ENCODE measurements at regions of chr9 and their contacts with region 1.

Region 1: GRCh38 chr9:34403554-34404380 is 27.1 kb upstream of the MYORG start:
- DNase-seq: peak in 4 of 5 donors; percentile 47 to 66 (median 62)
- ATAC-seq: peak in 2 of 4 donors; percentile 53 to 59
- H3K4me3 ChIP-seq: no peak overlapping the region
- H3K27ac ChIP-seq: no peak overlapping the region
- H3K4me1 ChIP-seq: peaks cover 0 to 6% (median 0%) of the 10 kb centered on the region in 12 donors
- H3K27me3 ChIP-seq: no peaks in the 10 kb centered on the region
- CTCF ChIP-seq: peak; percentile 92 to 99 (median 97)
- POLR2A ChIP-seq: no peak

Region 2: DNA sequence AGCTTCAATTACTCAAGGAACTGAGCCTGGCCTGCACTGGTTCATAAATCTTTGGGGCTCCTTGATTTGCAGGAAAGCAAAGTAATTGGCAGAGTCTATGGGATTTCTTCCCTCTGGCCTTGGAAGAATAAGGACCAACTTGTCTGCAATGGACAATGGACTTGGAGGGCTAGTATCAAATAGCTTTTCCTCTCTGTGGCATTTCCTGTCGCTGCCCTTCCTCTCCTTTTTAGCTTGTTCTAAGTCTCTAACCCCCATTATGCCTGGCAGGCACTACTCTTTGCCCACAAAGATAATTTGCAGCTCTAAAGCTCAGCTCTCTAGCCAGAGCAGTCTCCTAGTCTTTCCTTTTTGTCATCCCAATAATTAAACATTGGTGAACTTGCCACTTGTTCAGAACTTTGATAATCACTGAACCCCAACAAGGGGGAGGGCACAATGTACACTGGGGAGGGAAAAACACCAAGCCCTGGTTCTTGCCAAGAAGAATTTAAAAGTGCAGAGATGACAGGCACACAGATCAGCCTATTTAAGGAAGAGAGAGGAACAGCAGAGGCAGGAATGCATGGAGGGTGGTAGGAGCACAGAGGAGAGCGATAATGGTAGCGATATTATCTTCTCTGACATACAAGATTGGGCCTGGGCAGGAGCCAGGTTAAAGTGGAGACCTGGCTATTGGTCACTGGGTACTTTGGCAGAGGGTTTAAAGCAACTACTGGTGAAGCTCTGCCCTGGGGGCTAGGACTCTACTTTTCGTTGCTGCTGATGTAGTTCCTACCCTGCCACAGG is 16.1 kb after region 1 on chr9:
- intact Hi-C with region 1: loop called in 1 of 10 experiments (anchors 2 kb)
- DNase-seq: no peak
- ATAC-seq: peak in 1 of 4 donors; percentile 15
- H3K4me3 ChIP-seq: no peak overlapping the region
- H3K27ac ChIP-seq: no peak overlapping the region
- H3K4me1 ChIP-seq: peaks cover 0 to 16% (median 5%) of the 10 kb centered on the region in 12 donors
- H3K27me3 ChIP-seq: no peaks in the 10 kb centered on the region
- CTCF ChIP-seq: no peak
- POLR2A ChIP-seq: no peak

Region 3: GRCh38 chr9:34437006-34437925 is 33.5 kb after region 1 on chr9:
- intact Hi-C with region 1: loop called in 2 of 10 experiments (anchors 5 kb)
- DNase-seq: peak in 4 of 5 donors; percentile 38 to 48 (median 42)
- ATAC-seq: peak; percentile 68 to 89 (median 84)
- H3K4me3 ChIP-seq: no peak overlapping the region
- H3K27ac ChIP-seq: no peak overlapping the region
- H3K4me1 ChIP-seq: peaks cover 3 to 42% (median 28%) of the 10 kb centered on the region in 12 donors
- H3K27me3 ChIP-seq: no peaks in the 10 kb centered on the region
- CTCF ChIP-seq: peak; percentile 66 to 85 (median 79)
- POLR2A ChIP-seq: no peak

Region 4: DNA sequence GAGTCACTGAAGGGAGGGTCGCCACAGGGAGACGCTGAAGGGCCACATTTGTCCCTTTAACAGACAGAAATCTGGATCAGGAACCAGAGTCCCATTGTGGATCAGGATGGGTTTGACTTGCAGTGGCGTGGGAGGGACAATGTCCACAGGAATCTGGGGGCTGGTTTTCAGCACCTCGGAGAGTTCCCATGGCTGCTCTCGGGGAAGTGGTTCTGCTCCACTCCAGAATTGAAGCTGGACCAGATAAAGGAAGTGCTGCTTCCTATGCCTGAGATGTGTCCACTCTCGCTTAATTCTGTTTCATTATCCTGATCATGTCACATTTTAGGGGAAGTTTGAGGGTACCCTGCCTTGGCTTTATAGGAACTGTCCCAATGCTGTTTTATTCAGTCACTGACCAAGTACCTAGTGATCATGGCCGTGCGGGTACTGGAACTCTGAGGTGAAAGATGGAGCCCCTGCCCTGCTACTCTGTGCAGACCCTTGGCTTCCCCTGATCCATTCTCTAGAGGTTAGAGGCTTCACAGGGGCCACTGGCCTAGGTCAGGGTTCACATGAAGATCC is 90.3 kb after region 1 on chr9:
- intact Hi-C with region 1: loop called in 1 of 10 experiments (anchors 10 kb)
- DNase-seq: peak in 4 of 5 donors; percentile 56 to 68 (median 62)
- ATAC-seq: peak in 3 of 4 donors; percentile 57 to 80 (median 64)
- H3K4me3 ChIP-seq: no peak overlapping the region
- H3K27ac ChIP-seq: no peak overlapping the region
- H3K4me1 ChIP-seq: no peaks in the 10 kb centered on the region
- H3K27me3 ChIP-seq: peaks cover 0 to under 1% (median 0%) of the 10 kb centered on the region in 9 donors
- CTCF ChIP-seq: no peak
- POLR2A ChIP-seq: no peak

Region 5: GRCh38 chr9:34500623-34501267 is 97.0 kb after region 1 on chr9:
- intact Hi-C with region 1: loop called (anchors 1 to 10 kb)
- DNase-seq: peak in 4 of 5 donors; percentile 42 to 48 (median 46)
- ATAC-seq: peak; percentile 30 to 71 (median 54)
- H3K4me3 ChIP-seq: no peak overlapping the region
- H3K27ac ChIP-seq: no peak overlapping the region
- H3K4me1 ChIP-seq: peaks cover 0 to 26% (median 15%) of the 10 kb centered on the region in 12 donors
- H3K27me3 ChIP-seq: peaks cover 0 to 5% (median 0%) of the 10 kb centered on the region in 9 donors
- CTCF ChIP-seq: peak; percentile 94 to 99 (median 98)
- POLR2A ChIP-seq: no peak

Region 6: DNA sequence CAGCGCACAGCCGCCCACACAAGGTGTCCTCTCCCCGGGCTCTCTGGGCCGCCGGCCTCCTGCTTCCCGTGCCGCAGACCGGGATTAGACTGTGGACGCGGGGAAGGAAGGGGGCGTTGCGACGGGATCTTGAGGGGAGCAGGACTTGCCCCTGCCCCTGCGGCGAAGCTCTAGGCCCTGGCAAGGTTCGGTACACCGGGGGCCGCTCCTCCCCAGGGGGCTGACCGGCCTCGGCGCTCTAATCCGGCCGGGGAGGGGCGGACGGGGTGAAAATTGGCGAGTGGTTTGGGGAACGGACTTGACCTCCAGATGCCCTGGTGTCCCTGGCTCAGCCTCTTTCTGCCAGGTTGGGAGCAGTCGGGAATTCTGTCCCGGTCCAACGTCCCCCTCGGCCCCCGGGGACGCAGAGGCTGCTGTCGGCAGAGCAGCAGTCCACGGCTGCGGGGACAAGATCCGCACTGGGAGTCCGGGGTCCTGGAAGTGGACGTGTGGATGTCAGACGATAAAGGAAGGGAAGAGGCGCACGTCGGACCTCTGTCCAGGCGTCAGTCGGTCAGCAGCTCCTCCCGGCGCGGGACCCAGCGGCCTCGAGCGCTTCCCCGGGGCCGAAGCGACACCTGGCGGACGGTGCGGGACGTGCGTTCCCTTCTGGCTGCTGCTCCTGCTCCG is 187.6 kb after region 1 on chr9:
- intact Hi-C with region 1: loop called in 9 of 10 experiments (anchors 5 to 10 kb)
- DNase-seq: peak; percentile 85 to 92 (median 86)
- ATAC-seq: peak; percentile 68 to 91 (median 85)
- H3K4me3 ChIP-seq: peak overlapping the region in 10 of 12 donors; percentile 13 to 63 (median 52)
- H3K27ac ChIP-seq: peak overlapping the region in 4 of 12 donors; percentile 4 to 50 (median 24)
- H3K4me1 ChIP-seq: peaks cover 0 to 52% (median 30%) of the 10 kb centered on the region in 12 donors
- H3K27me3 ChIP-seq: peaks cover 4 to 77% (median 13%) of the 10 kb centered on the region in 9 donors
- CTCF ChIP-seq: peak; percentile 82 to 98 (median 94)
- POLR2A ChIP-seq: no peak

Region 7: DNA sequence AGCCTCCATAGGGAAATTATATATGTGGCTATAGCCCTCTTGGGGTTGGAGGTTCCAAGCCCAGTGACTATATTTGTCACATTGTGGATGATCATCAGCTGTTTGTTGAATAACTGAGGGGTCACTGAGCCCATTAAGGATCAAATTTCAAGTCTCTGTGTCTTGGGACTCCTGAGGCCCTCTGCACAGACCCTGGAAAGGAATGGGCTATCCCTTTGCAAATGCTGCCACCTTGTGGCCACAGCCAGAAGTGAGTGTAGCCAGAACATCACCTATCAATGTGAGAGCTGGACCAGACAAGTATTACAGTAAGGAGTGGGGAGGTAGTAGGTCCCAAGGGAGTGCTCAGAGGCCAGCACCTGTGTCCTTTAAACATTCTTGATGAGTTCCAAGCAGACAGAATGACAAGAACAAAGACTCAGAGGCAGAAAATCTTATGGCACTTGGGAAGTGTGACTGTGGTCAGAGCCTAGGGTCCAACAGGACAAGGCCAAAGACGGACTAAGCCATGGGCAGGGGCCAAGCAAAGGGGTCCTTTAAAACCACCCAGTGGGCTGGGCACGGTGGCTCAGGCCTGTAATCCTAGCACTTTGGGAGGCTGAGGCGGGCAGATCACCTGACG is 200.0 kb after region 1 on chr9:
- intact Hi-C with region 1: loop called in 4 of 10 experiments (anchors 5 to 10 kb)
- DNase-seq: peak; percentile 70 to 84 (median 78)
- ATAC-seq: peak; percentile 80 to 88 (median 86)
- H3K4me3 ChIP-seq: no peak overlapping the region
- H3K27ac ChIP-seq: no peak overlapping the region
- H3K4me1 ChIP-seq: peaks cover 0 to 5% (median 0%) of the 10 kb centered on the region in 12 donors
- H3K27me3 ChIP-seq: no peaks in the 10 kb centered on the region
- CTCF ChIP-seq: peak; percentile 83 to 95 (median 92)
- POLR2A ChIP-seq: no peak

Measured in heart left ventricle (tissue), 16 donors.